ENCODE measurements at regions of chr3 and their contacts with region 1.

Region 1: GRCh38 chr3:128680602-128681368 is 30.2 kb upstream of the RPN1 start:
- DNase-seq: peak; percentile 95
- H3K4me3 ChIP-seq: peak overlapping the region; percentile 47
- H3K27ac ChIP-seq: peak overlapping the region; percentile 87
- H3K4me1 ChIP-seq: peaks cover 4% of the 10 kb centered on the region
- H3K27me3 ChIP-seq: no peaks in the 10 kb centered on the region
- CTCF ChIP-seq: peak; percentile 99

Region 2: DNA sequence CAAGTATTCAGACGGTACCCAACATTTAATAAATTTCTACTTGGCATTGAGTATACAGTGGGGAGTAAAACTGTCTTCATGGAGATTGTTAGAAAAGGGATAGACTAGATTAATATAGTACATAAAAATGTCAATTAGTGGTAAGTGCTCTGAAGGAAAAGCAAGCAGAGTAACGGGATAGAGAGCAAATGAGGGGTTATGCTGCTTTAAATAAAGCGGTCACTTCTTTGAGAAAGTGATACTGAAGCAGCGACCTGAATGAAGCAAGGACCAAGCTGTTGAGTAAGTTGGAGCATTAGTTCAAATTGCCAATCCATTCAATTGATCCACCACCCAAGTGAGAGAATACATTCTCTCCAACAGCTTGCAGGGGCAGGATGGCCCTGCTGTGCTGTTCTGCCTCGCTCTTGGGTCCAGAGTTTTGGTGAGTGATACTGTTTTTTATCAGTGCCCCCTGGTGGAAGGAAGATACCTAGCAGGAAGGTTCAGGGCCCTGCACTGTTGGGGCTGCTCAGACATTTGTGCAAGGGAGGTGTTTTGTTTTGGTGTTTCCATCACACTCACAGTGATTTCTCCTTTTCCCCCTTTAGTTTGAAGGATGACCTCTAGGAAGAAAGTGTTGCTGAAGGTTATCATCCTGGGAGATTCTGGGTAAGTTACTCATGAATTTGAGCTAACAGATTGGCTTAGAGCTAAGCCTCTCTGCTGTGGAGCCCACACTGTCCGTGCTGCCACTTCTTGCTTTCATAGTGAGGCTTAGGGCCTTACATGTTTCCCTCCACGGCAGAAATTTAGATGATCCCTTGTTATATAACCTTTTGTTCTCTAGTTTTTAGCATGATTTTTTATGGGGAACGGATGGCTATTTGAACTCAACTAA is 114.2 kb after region 1 on chr3:
- CTCF ChIA-PET with region 1: interaction called, 18 read pairs
- POLR2A ChIA-PET with region 1: no interaction called
- intact Hi-C with region 1: loop called (anchors 2 kb)
- DNase-seq: peak; percentile 82
- H3K4me3 ChIP-seq: no peak overlapping the region
- H3K27ac ChIP-seq: peak overlapping the region; percentile 36
- H3K4me1 ChIP-seq: peaks cover 18% of the 10 kb centered on the region
- H3K27me3 ChIP-seq: no peaks in the 10 kb centered on the region
- CTCF ChIP-seq: peak; percentile 84

Region 3: GRCh38 chr3:128805772-128806171 is 125.0 kb after region 1 on chr3:
- CTCF ChIA-PET with region 1: interaction called, 3 read pairs
- POLR2A ChIA-PET with region 1: no interaction called
- intact Hi-C with region 1: loop called (anchors 5 kb)
- DNase-seq: no peak
- H3K4me3 ChIP-seq: no peak overlapping the region
- H3K27ac ChIP-seq: no peak overlapping the region
- H3K4me1 ChIP-seq: no peaks in the 10 kb centered on the region
- H3K27me3 ChIP-seq: no peaks in the 10 kb centered on the region
- CTCF ChIP-seq: no peak

Region 4: GRCh38 chr3:128824132-128824850 is 143.5 kb after region 1 on chr3:
- CTCF ChIA-PET with region 1: no interaction called
- POLR2A ChIA-PET with region 1: no interaction called
- intact Hi-C with region 1: no loop called
- DNase-seq: no peak
- H3K4me3 ChIP-seq: no peak overlapping the region
- H3K27ac ChIP-seq: no peak overlapping the region
- H3K4me1 ChIP-seq: no peaks in the 10 kb centered on the region
- H3K27me3 ChIP-seq: no peaks in the 10 kb centered on the region
- CTCF ChIP-seq: no peak